Activated CD4-positive, alpha-beta T cell treated with anti-CD3 and anti-CD28 coated beads for 36 hours (primary cell): ENCODE measurements at regions of chr1 and their contacts with region 1.

Region 1: DNA sequence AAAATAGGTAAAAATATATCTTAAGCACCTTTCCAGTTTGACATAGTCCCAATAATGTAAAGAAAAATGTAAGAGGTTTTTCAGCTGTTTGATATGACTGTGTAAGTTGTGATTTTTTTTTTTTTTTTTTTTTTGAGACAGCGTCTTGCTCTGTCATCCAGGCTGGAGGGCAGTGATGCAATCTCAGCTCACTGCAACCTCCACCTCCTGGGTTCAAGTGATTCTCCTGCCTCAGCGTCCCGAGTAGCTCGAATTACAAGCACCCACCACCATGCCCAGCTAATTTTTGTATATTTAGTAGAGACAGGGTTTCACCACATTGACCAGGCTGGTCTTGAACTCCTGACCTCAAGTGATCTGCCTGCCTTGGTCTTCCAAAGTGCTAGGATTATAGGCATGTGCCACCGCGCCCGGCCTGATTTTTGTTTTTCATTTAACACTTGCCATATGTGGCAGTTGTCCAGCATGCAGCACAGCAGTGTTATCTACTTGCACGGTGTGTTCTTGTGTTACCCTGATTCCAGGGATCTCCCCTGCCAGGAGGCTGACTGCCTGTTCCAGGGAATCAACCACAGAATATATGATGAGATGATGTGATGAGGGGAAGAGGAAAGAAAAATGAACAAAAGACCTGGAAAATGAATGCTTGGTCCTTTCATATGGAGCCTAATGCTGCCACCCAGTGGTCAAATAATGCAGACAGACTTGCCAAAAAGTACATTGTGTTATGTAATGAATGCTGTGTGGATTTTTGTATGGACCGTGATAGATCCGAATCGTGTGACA is 79.0 kb downstream of the RAVER2 start:
- DNase-seq: peak; percentile 74
- ATAC-seq: no peak
- H3K4me3 Mint-ChIP-seq: no peak overlapping the region
- H3K27ac Mint-ChIP-seq: peak overlapping the region; percentile 27
- H3K4me1 Mint-ChIP-seq: peaks cover 31% of the 10 kb centered on the region
- H3K27me3 Mint-ChIP-seq: no peaks in the 10 kb centered on the region

Region 2: GRCh38 chr1:64268653-64269557 is 555.0 kb before region 1 on chr1:
- CTCF ChIA-PET with region 1: interaction called, 6 read pairs
- POLR2A ChIA-PET with region 1: no interaction called
- intact Hi-C with region 1: loop called (anchors 1 kb)
- DNase-seq: peak; percentile 83
- ATAC-seq: peak; percentile 70
- H3K4me3 Mint-ChIP-seq: no peak overlapping the region
- H3K27ac Mint-ChIP-seq: no peak overlapping the region
- H3K4me1 Mint-ChIP-seq: no peaks in the 10 kb centered on the region
- H3K27me3 Mint-ChIP-seq: peaks cover 7% of the 10 kb centered on the region

Region 3: DNA sequence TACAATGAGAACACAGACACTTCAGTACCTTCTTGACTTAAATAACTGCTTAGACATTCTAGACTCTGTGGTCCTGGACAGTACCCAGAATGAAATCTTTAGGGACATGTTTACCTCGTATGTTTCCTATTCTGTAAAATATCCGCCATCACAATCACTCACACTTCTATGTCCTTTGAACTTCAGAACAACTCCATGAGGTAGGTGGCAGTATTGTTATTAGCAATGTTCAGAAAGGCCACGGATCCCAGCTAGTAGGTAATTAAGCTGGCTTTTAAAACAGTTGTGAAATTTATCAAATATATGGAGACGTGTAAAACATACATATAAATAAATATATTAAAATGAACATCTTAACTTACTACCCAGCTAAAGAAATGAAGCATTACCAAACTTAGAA is 270.6 kb before region 1 on chr1:
- CTCF ChIA-PET with region 1: no interaction called
- POLR2A ChIA-PET with region 1: no interaction called
- intact Hi-C with region 1: loop called in 1 of 2 experiments (anchors 5 kb)
- DNase-seq: no peak
- ATAC-seq: peak; percentile 32
- H3K4me3 Mint-ChIP-seq: no peak overlapping the region
- H3K27ac Mint-ChIP-seq: no peak overlapping the region
- H3K4me1 Mint-ChIP-seq: peaks cover 39% of the 10 kb centered on the region
- H3K27me3 Mint-ChIP-seq: no peaks in the 10 kb centered on the region

Region 4: GRCh38 chr1:64744492-64745180 is 79.2 kb before region 1 on chr1 and contains the start of gene RAVER2:
- CTCF ChIA-PET with region 1: interaction called, 3 read pairs
- POLR2A ChIA-PET with region 1: no interaction called
- intact Hi-C with region 1: loop called (anchors 1 kb)
- DNase-seq: peak; percentile 72
- ATAC-seq: peak; percentile 79
- H3K4me3 Mint-ChIP-seq: peak within 1 kb of the TSS; percentile 76
- H3K27ac Mint-ChIP-seq: peak within 1 kb of the TSS; percentile 70
- H3K4me1 Mint-ChIP-seq: peaks cover 17% of the 10 kb centered on the region
- H3K27me3 Mint-ChIP-seq: peaks cover 5% of the 10 kb centered on the region
- total RNA-seq, gene RAVER2: 3.2 to 3.6 TPM

Region 5: GRCh38 chr1:65002508-65003315 is 178.8 kb after region 1 on chr1:
- CTCF ChIA-PET with region 1: no interaction called
- POLR2A ChIA-PET with region 1: no interaction called
- intact Hi-C with region 1: loop called in 1 of 2 experiments (anchors 2 kb)
- DNase-seq: peak; percentile 86
- ATAC-seq: peak; percentile 85
- H3K4me3 Mint-ChIP-seq: peak overlapping the region; percentile 70
- H3K27ac Mint-ChIP-seq: peak overlapping the region; percentile 87
- H3K4me1 Mint-ChIP-seq: peaks cover 28% of the 10 kb centered on the region
- H3K27me3 Mint-ChIP-seq: no peaks in the 10 kb centered on the region